GM12878 (cell line): ENCODE measurements at regions of chr7 and their contacts with region 1.

Region 1: DNA sequence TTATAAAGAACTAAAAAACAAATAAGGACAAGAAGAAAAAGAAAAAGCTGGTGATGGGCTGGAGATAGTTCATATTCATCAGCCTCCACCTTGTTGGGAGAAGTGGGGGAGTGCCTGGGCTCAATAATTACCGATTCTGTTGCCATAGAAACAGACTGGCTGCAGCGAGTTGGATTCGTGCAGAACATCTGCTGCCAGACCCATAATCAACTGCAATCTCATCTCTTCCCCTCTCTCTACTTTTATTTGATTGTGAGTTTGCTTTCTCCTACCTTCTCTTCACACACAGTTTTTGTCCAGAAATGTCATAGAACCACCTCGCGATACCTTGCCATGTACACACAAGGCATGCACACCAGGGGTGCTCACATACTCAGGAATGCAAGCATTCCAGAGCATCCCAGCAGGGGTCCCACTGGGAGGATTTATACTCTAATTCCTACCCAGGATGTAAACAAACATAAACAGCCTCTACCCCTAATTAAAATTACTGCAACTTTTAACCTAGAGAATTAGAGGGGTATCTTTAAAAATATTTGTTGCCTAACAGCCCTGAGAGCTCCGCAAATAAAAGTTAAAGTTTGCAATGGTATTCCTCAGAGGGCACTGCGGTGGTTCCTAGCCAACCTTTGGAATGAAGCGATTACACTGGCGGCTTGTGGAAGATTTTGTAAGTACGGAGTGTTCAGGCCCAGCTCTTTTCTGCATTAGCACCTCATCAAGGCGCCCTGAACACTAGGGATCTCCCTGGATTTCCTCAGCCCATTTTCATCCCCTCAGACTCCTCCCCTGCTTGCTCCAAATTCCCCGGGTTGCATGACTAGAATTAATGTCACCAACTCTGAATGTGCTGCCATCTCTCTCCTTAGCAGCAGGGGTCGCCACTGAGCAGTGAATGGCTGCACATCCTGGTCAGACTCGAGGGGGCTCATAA is 262.4 kb upstream of the AOAH start:
- DNase-seq: no peak
- ATAC-seq: peak; percentile 93
- H3K4me3 ChIP-seq: no peak overlapping the region
- H3K27ac ChIP-seq: no peak overlapping the region
- H3K4me1 ChIP-seq: no peaks in the 10 kb centered on the region
- H3K27me3 ChIP-seq: no peaks in the 10 kb centered on the region
- CTCF ChIP-seq: peak; percentile 83 to 92 (median 89)
- EP300 ChIP-seq: no peak
- POLR2A ChIP-seq: no peak
- RAD21 ChIP-seq: peak; percentile 87

Region 2: DNA sequence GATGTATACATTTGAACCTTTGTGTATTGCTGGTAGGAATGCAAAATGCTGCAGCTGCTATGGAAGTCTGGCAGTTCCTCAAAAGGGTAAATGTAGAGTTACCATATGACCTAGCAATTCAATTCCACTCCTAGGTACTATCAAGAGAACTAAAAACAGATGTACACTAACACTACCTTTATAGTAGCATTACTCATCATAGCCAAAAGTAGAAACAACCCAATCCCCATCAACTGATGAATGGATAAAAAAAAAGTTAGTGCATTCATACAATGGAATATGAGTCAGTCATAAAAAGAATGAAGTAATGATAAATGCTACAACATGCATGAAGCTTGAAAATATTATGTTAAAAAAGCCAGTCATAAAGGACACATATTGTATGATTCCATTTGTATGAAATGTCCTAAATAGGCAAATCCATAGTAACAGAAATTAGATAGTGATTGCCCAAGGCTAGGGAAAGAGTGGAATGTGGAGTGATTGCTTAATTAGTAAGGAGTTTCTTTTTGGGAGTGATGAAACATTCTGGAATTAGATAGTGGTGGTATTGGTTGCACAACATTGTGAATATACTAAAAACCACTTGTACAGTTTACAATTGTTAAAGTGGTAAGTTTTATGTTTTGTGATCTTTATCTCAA is 166.0 kb before region 1 on chr7:
- CTCF ChIA-PET with region 1: no interaction called
- POLR2A ChIA-PET with region 1: no interaction called
- RAD21 ChIA-PET with region 1: no interaction called
- SMC1A ChIA-PET with region 1: no interaction called
- in situ Hi-C with region 1: no loop called
- intact Hi-C with region 1: no loop called
- DNase-seq: no peak
- ATAC-seq: no peak
- H3K4me3 ChIP-seq: no peak overlapping the region
- H3K27ac ChIP-seq: no peak overlapping the region
- H3K4me1 ChIP-seq: no peaks in the 10 kb centered on the region
- H3K27me3 ChIP-seq: no peaks in the 10 kb centered on the region; a peak in 1 of 4 replicates
- CTCF ChIP-seq: no peak
- EP300 ChIP-seq: no peak
- POLR2A ChIP-seq: no peak
- RAD21 ChIP-seq: no peak

Region 3: GRCh38 chr7:36958111-36958733 is 28.5 kb before region 1 on chr7:
- CTCF ChIA-PET with region 1: interaction called, 22 read pairs
- POLR2A ChIA-PET with region 1: interaction called, 3 read pairs
- RAD21 ChIA-PET with region 1: interaction called, 3 read pairs
- SMC1A ChIA-PET with region 1: interaction called, 17 read pairs
- in situ Hi-C with region 1: no loop called
- intact Hi-C with region 1: no loop called
- DNase-seq: no peak
- ATAC-seq: no peak
- H3K4me3 ChIP-seq: no peak overlapping the region
- H3K27ac ChIP-seq: no peak overlapping the region
- H3K4me1 ChIP-seq: peaks cover 30% of the 10 kb centered on the region
- H3K27me3 ChIP-seq: no peaks in the 10 kb centered on the region
- CTCF ChIP-seq: no peak
- EP300 ChIP-seq: no peak
- POLR2A ChIP-seq: no peak
- RAD21 ChIP-seq: no peak

Region 4: GRCh38 chr7:37007268-37007667 is 20.6 kb after region 1 on chr7:
- CTCF ChIA-PET with region 1: interaction called, 13 read pairs
- POLR2A ChIA-PET with region 1: interaction called, 3 read pairs
- RAD21 ChIA-PET with region 1: interaction called, 3 read pairs
- SMC1A ChIA-PET with region 1: interaction called, 6 read pairs
- in situ Hi-C with region 1: no loop called
- intact Hi-C with region 1: no loop called
- DNase-seq: no peak
- ATAC-seq: no peak
- H3K4me3 ChIP-seq: no peak overlapping the region
- H3K27ac ChIP-seq: no peak overlapping the region
- H3K4me1 ChIP-seq: no peaks in the 10 kb centered on the region
- H3K27me3 ChIP-seq: no peaks in the 10 kb centered on the region
- CTCF ChIP-seq: no peak
- EP300 ChIP-seq: no peak
- POLR2A ChIP-seq: no peak
- RAD21 ChIP-seq: no peak

Region 5: DNA sequence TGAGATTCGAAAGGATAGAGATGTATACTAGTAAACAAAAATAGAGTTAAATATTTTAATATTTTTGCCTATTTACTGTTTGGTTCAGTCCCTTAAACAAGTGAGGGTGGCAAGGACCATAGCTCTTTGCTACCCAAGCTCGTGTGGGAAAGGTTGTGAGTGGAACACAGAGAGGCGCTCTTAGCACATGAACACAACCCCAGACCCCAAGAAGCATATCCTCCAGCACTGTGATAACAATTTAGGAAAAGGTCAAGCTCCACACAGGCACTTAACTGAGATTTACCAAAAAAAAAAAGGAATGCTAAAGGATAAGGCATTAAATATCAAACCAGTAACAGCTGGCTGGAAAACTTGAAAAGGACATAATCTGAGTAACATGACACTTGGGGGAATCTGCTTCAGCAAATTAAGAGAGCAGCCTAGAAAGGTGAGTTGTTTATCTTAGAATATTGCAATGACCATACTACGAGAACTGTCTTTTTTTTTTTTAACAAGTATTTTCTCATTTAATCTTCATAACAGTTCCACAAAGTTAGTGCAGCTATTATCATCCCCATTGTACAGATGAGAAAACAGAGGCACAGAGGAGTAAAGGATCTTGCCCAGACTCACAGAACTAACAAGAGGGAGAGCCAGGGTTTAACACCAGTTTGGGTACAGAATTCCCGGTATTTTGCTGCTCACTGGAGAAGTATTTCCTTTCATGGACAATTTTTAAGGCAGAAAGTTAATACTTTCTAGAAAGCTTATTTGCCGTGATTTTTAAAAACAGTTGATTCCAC is 41.1 kb after region 1 on chr7:
- CTCF ChIA-PET with region 1: interaction called, 10 read pairs
- POLR2A ChIA-PET with region 1: no interaction called
- RAD21 ChIA-PET with region 1: interaction called, 14 read pairs
- SMC1A ChIA-PET with region 1: interaction called, 33 read pairs
- in situ Hi-C with region 1: no loop called
- intact Hi-C with region 1: no loop called
- DNase-seq: no peak
- ATAC-seq: no peak
- H3K4me3 ChIP-seq: no peak overlapping the region
- H3K27ac ChIP-seq: no peak overlapping the region
- H3K4me1 ChIP-seq: no peaks in the 10 kb centered on the region
- H3K27me3 ChIP-seq: no peaks in the 10 kb centered on the region
- CTCF ChIP-seq: peak in 1 of 3 experiments; percentile 29; a peak in 2 of 6 replicates
- EP300 ChIP-seq: no peak
- POLR2A ChIP-seq: no peak
- RAD21 ChIP-seq: peak; percentile 51; the same call in 1 of the 2 replicates

Region 6: DNA sequence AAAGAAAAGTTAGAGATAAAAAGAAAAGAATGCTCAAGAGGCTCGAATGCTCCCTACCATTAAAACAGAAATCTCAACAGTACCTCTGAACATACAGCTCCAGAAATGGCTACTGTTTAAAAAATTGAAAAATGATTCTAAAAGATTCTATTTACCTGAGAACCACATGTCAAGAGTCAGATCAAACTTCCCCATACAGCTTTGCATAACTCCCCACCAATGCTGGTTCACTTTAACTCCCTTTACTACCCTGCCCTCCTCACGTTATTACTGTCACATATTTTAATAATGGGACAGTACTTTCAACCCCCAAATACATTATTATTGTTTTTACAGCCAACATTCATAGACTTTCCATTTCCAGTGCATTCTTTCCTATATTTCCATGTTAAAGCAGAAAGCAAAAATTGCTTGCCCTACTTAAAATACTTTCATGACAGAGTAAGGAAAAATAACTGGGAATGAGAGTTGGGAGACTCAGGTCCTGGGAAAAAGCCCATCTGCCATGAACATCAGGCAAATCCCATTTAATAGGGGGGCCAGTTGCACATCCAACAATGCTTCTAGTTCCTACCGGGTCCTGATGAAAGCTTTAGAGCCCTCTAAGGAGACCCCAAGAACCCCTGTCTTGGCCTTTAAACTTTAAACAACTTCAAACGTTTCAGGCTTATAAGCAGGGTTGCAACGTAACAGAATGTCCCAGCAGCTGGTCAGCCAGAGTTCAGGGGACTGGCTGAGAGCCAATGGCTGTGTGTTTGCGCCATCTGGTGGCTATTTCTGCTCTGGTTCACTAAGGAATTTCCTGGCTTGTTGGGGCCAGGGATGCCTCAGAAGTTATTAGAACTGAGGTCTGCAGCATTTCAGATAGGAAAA is 214.5 kb after region 1 on chr7:
- CTCF ChIA-PET with region 1: interaction called, 33 read pairs
- POLR2A ChIA-PET with region 1: no interaction called
- RAD21 ChIA-PET with region 1: interaction called, 5 read pairs
- SMC1A ChIA-PET with region 1: interaction called, 5 read pairs
- in situ Hi-C with region 1: no loop called
- intact Hi-C with region 1: loop called (anchors 5 kb)
- DNase-seq: no peak
- ATAC-seq: peak; percentile 90
- H3K4me3 ChIP-seq: no peak overlapping the region
- H3K27ac ChIP-seq: no peak overlapping the region
- H3K4me1 ChIP-seq: 0 out of 2 replicates have a peak, but pooled peaks cover 3% of the 10 kb centered on the region
- H3K27me3 ChIP-seq: no peaks in the 10 kb centered on the region
- CTCF ChIP-seq: peak; percentile 76 to 85 (median 80)
- EP300 ChIP-seq: no peak
- POLR2A ChIP-seq: no peak
- RAD21 ChIP-seq: peak; percentile 69